Activated CD8-positive, alpha-beta memory T cell treated with anti-CD3 and anti-CD28 coated beads, Interleukin-2, amount 10 ng/mL, durations not matched to agents 7 days and 5 days (primary cell): ENCODE measurements at regions of chr11 and their contacts with region 1.

Region 1: DNA sequence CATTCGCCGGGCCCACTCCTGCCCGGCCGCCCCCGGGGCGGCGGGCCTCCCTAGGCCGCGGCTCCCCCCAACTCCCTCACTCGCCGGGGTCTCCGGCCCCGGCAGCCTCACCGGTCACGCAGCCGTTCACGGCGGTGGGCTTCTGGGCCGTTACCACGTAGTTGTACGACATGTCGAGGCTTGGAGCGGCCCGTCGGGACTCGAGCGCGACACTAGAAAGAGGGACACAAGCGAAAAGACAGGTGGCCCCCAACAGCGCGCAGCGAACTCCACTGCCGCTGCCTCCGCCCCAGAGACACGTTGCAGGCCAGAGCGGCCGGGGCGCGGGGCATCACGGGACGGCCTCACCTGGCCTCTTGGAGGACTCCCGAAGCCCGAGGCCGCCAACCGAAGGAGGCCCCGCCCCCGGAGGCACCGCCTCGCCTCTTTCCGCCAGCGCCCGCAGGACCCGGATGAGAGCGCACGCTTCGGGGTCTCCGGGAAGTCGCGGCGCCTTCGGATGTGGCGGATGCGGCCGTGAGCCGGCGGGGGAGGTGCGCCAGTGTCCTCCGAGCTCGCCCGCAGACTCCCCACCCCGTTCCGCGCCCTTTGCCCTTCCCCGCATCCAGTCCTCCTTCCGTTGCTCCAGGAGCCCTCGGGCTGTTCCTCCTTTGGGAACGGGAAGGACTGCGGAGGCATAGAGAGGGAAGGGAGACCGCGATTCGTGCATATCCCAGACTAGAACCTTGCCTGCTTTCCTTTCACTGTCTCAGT is at the starts of genes DDB1 and TKFC:
- DNase-seq: peak; percentile 99
- ATAC-seq: peak; percentile 95
- H3K4me3 Mint-ChIP-seq: peak within 1 kb of the TSS; percentile 86
- H3K27ac Mint-ChIP-seq: peak within 1 kb of the TSS; percentile 98
- H3K4me1 Mint-ChIP-seq: peaks cover 76% of the 10 kb centered on the region
- H3K27me3 Mint-ChIP-seq: no peaks in the 10 kb centered on the region
- total RNA-seq, gene DDB1: 189 to 258 TPM
- total RNA-seq, gene TKFC: 36.9 to 42.3 TPM

Region 2: DNA sequence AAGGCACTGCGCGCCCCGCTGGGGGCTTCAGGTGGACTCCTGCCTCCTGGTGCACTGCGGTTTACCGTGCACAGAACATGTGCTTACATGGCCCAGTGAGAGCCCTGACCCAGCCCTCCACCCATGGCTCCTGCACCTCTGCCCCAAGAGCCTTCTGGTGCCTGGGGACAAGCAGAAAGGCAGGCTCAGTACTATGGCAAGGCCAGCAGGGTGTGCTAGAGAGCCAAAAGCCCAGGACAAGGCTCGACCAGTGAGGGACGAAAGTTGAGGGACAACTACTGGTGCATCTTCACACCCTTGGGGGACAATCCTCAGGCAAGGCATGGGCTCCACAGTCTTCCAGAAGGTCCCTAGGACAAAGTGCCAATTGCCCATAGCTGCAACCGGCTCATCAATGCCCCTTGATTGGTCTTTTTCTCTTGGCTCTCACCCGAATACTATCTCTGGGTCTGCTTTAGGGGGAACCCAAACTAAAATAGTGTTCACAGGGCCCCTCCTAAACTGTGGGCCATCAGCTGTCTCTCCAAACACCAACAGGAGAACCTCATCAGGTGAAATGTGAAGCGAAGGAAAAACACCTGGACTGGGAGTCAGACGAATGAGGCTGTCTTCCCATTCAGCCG is 78.5 kb before region 1 on chr11:
- CTCF ChIA-PET with region 1: interaction called, 11 read pairs
- DNase-seq: peak; percentile 75
- ATAC-seq: peak; percentile 95
- H3K4me3 Mint-ChIP-seq: no peak overlapping the region
- H3K27ac Mint-ChIP-seq: no peak overlapping the region
- H3K4me1 Mint-ChIP-seq: peaks cover 1% of the 10 kb centered on the region
- H3K27me3 Mint-ChIP-seq: no peaks in the 10 kb centered on the region

Region 3: GRCh38 chr11:61361686-61362541 is 28.9 kb after region 1 on chr11 and contains the starts of genes CYB561A3 and TMEM138:
- CTCF ChIA-PET with region 1: interaction called, 180 read pairs
- DNase-seq: peak; percentile 96
- ATAC-seq: peak; percentile 95
- H3K4me3 Mint-ChIP-seq: peak within 1 kb of the TSS; percentile 99
- H3K27ac Mint-ChIP-seq: peak within 1 kb of the TSS; percentile 98
- H3K4me1 Mint-ChIP-seq: peaks cover 40% of the 10 kb centered on the region
- H3K27me3 Mint-ChIP-seq: no peaks in the 10 kb centered on the region
- total RNA-seq, gene CYB561A3: 43.9 to 51.2 TPM
- total RNA-seq, gene TMEM138: 48.3 to 60.6 TPM

Region 4: DNA sequence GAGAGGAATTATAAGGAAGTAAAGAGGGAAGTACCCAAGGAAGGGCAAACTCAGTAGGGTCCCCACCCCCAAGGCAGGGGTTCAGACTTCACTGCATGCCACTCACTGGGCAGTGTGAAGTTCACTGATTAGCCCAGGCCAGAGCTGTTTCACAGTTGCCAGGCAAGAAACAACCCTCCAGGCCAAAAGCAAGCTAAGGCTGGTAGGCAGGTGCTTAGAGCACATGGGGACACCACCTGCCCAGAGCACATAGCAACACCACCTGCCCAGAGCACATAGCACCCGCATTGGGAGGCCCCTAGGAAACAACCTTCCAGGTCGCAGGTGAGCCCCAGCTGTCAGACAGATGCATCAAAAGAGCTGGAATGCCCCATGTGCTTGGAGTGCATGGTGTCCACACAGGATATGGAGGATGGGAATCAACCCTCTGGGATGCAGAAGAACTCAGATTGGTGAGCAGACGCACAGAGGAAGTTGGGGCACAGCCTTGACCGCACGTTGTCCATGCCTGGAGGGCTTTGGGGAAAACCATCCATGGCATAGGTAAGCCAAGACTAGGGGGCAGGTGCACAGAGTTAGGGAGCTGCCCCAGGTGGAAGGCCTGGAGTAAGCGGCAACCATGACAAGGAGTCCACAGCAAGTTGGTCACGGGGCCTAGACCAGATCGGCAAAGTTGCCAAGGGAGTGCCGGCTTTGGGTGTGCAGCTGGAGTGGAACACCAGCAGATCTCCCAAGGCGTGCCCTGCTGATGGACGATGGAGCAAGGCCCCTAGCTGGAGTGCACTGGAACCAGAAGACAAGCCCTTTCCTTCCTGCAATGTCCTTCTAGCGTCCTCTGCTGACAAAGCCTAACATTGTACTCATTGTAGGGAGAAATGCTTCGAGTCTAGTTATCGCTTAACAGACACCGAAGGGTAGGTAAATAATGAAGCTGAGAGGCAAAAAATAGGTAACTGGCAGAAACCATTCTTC is 51.6 kb after region 1 on chr11:
- CTCF ChIA-PET with region 1: interaction called, 261 read pairs
- DNase-seq: no peak
- ATAC-seq: no peak
- H3K4me3 Mint-ChIP-seq: no peak overlapping the region
- H3K27ac Mint-ChIP-seq: no peak overlapping the region
- H3K4me1 Mint-ChIP-seq: peaks cover 5% of the 10 kb centered on the region
- H3K27me3 Mint-ChIP-seq: no peaks in the 10 kb centered on the region

Region 5: GRCh38 chr11:61406067-61406466 is 73.1 kb after region 1 on chr11:
- CTCF ChIA-PET with region 1: interaction called, 21 read pairs
- DNase-seq: no peak
- ATAC-seq: no peak
- H3K4me3 Mint-ChIP-seq: no peak overlapping the region
- H3K27ac Mint-ChIP-seq: no peak overlapping the region
- H3K4me1 Mint-ChIP-seq: no peaks in the 10 kb centered on the region
- H3K27me3 Mint-ChIP-seq: no peaks in the 10 kb centered on the region

Region 6: GRCh38 chr11:61437496-61437895 is 104.5 kb after region 1 on chr11:
- CTCF ChIA-PET with region 1: interaction called, 48 read pairs
- DNase-seq: no peak
- ATAC-seq: no peak
- H3K4me3 Mint-ChIP-seq: no peak overlapping the region
- H3K27ac Mint-ChIP-seq: no peak overlapping the region
- H3K4me1 Mint-ChIP-seq: peaks cover 25% of the 10 kb centered on the region
- H3K27me3 Mint-ChIP-seq: no peaks in the 10 kb centered on the region